Endothelial cell of umbilical vein (primary cell): ENCODE measurements at regions of chr10 and their contacts with region 1.

Region 1: DNA sequence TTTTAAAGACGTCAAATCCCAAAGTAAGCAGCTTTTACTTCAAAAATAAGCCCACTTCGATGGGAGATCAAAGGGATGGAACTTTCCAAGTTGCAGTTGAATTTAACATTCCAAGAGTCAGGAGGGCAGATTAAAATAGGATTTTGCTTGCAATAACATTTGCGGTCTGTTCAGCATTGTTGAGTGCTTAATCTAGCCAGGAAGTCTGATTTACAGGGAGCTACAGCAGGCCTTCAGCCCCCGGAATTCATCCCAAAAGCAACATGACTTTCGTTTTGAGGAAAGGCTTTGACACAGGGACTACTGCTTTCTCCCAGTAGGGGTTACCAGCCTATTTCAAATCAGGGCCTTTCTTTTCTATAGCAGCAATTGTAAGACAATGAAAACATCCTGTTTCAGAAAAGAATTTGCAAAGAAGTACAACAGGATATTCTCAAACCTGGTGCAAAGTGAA is 279.6 kb upstream of the PITRM1 start:
- DNase-seq: peak; percentile 85
- H3K4me3 ChIP-seq: no peak overlapping the region
- H3K27ac ChIP-seq: peak overlapping the region; percentile 98
- H3K4me1 ChIP-seq: peaks cover 43% of the 10 kb centered on the region
- H3K27me3 ChIP-seq: no peaks in the 10 kb centered on the region
- CTCF ChIP-seq: peak; percentile 30 to 40
- POLR2A ChIP-seq: no peak

Region 2: GRCh38 chr10:3265088-3265487 is 187.1 kb before region 1 on chr10:
- CTCF ChIA-PET with region 1: no interaction called
- POLR2A ChIA-PET with region 1: no interaction called
- dilution Hi-C with region 1: no loop called
- intact Hi-C with region 1: loop called (anchors 1 kb)
- DNase-seq: peak; percentile 26
- H3K4me3 ChIP-seq: no peak overlapping the region
- H3K27ac ChIP-seq: peak overlapping the region; percentile 82
- H3K4me1 ChIP-seq: peaks cover 39% of the 10 kb centered on the region
- H3K27me3 ChIP-seq: no peaks in the 10 kb centered on the region
- CTCF ChIP-seq: no peak
- POLR2A ChIP-seq: no peak

Region 3: DNA sequence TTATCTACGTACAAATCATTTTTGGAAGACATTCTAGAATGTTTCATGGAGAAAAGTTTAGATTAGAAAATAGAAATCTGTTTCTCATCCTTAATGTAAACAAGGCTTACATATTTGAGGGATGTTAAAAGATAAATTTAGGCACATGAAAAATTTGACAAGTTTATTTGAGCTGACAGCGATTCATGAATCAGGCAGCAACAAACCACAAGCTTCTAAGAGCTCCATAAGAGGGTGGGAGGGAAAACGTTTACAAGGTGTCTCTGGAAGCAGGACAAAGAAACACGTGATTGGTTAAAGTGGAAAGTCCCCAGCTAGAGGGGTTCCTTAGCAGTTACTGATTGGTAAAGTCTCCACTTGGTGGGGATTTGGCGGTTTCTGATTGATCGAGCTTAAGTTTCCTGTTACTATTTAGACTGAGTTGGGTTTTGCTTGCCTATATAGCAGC is 50.7 kb before region 1 on chr10:
- CTCF ChIA-PET with region 1: interaction called, 3 read pairs
- POLR2A ChIA-PET with region 1: no interaction called
- dilution Hi-C with region 1: no loop called
- intact Hi-C with region 1: loop called (anchors 1 kb)
- DNase-seq: no peak
- H3K4me3 ChIP-seq: no peak overlapping the region
- H3K27ac ChIP-seq: no peak overlapping the region
- H3K4me1 ChIP-seq: peaks cover 24% of the 10 kb centered on the region
- H3K27me3 ChIP-seq: no peaks in the 10 kb centered on the region
- CTCF ChIP-seq: no peak
- POLR2A ChIP-seq: no peak

Region 4: GRCh38 chr10:3424110-3424851 is 27.9 kb before region 1 on chr10:
- CTCF ChIA-PET with region 1: interaction called, 4 read pairs
- POLR2A ChIA-PET with region 1: no interaction called
- dilution Hi-C with region 1: no loop called
- intact Hi-C with region 1: loop called (anchors 1 kb)
- DNase-seq: peak; percentile 45
- H3K4me3 ChIP-seq: no peak overlapping the region
- H3K27ac ChIP-seq: peak overlapping the region; percentile 72
- H3K4me1 ChIP-seq: peaks cover 38% of the 10 kb centered on the region
- H3K27me3 ChIP-seq: no peaks in the 10 kb centered on the region
- CTCF ChIP-seq: no peak
- POLR2A ChIP-seq: no peak

Region 5: GRCh38 chr10:3435671-3436070 is 16.5 kb before region 1 on chr10:
- CTCF ChIA-PET with region 1: interaction called, 12 read pairs
- POLR2A ChIA-PET with region 1: no interaction called
- dilution Hi-C with region 1: no loop called
- intact Hi-C with region 1: no loop called
- DNase-seq: peak; percentile 93
- H3K4me3 ChIP-seq: no peak overlapping the region
- H3K27ac ChIP-seq: peak overlapping the region; percentile 19
- H3K4me1 ChIP-seq: peaks cover 13% of the 10 kb centered on the region
- H3K27me3 ChIP-seq: no peaks in the 10 kb centered on the region
- CTCF ChIP-seq: no peak
- POLR2A ChIP-seq: no peak

Region 6: DNA sequence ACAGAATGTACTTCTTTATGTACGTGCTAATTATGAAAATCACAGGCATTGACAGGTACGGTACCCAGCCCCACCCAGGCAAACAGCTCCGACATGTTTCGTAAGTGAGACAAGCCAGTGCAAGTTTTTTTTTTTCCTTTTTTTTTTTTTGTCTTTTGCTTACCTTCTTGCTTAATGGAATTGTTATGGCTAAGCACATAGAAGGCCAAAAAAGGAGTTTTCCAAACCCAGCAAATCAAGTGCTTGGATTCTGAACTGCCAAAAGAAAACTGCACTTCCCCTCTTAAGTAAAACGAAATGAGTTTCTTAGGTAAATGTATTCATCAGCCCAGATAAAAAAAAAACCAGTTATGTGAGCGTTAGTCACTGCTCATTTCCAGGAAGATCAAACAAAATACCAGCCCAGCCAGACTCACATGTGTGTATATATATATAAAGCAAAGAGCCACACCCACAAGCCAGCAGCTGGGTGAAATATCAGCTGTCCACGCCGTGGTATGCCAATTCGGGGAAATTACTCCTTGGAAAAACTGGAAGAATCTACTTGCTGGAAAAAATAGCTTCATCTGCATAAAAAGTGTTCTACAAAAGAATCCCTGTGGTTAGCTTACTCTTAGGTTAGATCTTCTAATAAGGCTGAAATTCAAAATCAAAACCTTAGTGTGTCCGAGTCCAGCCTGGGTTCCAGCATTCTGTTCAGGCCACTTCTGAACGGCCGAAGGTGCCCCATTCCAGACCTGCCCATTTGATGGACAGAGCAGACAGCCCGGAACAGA is 324.8 kb after region 1 on chr10:
- CTCF ChIA-PET with region 1: interaction called, 6 read pairs
- POLR2A ChIA-PET with region 1: no interaction called
- dilution Hi-C with region 1: no loop called
- intact Hi-C with region 1: loop called (anchors 1 kb)
- DNase-seq: peak; percentile 78
- H3K4me3 ChIP-seq: no peak overlapping the region
- H3K27ac ChIP-seq: peak overlapping the region; percentile 36
- H3K4me1 ChIP-seq: peaks cover 55% of the 10 kb centered on the region
- H3K27me3 ChIP-seq: no peaks in the 10 kb centered on the region
- CTCF ChIP-seq: no peak
- POLR2A ChIP-seq: peak; percentile 37

Region 7: GRCh38 chr10:4663162-4663904 is 1211.1 kb after region 1 on chr10:
- CTCF ChIA-PET with region 1: no interaction called
- POLR2A ChIA-PET with region 1: no interaction called
- dilution Hi-C with region 1: no loop called
- intact Hi-C with region 1: loop called (anchors 5 kb)
- DNase-seq: peak; percentile 97
- H3K4me3 ChIP-seq: no peak overlapping the region
- H3K27ac ChIP-seq: peak overlapping the region; percentile 97
- H3K4me1 ChIP-seq: peaks cover 23% of the 10 kb centered on the region
- H3K27me3 ChIP-seq: no peaks in the 10 kb centered on the region
- CTCF ChIP-seq: no peak
- POLR2A ChIP-seq: peak; percentile 65